Lower leg skin (tissue), 4 donors: ENCODE measurements at regions of chr7 and their contacts with region 1.

Region 1: GRCh38 chr7:134514663-134515062 is 12.7 kb upstream of the AKR1B10 start:
- DNase-seq: no peak
- H3K4me3 ChIP-seq: no peak overlapping the region
- CTCF ChIP-seq: peak in 2 of 3 donors; percentile 42 to 62
- POLR2A ChIP-seq: no peak

Region 2: DNA sequence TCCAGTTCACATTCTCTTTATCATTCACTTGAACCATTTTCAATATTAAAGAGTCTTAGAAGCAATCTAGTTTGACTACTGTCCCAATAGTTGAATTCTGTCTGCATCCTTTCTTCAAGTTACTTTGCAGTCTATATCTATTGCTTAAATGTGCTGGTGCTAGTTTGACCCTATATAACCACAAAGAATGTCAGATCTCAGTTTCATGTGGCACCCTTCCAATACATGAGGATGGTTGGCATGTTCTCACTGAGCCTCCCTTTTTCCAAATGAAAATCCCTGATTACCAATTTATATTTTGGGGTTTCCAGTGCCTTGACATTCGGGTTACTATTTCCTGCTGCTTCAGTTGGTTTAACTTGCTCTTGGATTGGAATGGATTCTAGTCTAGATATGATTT is 969.0 kb before region 1 on chr7:
- intact Hi-C with region 1: no loop called
- DNase-seq: no peak
- H3K4me3 ChIP-seq: no peak overlapping the region
- CTCF ChIP-seq: no peak
- POLR2A ChIP-seq: no peak

Region 3: GRCh38 chr7:134432296-134433152 is 82.1 kb before region 1 on chr7:
- intact Hi-C with region 1: loop called (anchors 10 kb)
- DNase-seq: peak; percentile 83 to 96
- H3K4me3 ChIP-seq: no peak overlapping the region
- CTCF ChIP-seq: peak in 1 of 3 donors; percentile 72
- POLR2A ChIP-seq: no peak